ENCODE measurements at regions of chr7 and their contacts with region 1.

Region 1: GRCh38 chr7:105776058-105776751 is 100.2 kb downstream of the ATXN7L1 start:
- DNase-seq: peak; percentile 94
- ATAC-seq: peak; percentile 94
- H3K4me3 ChIP-seq: peak overlapping the region in 1 of 2 experiments; percentile 38; a peak in 2 of 4 replicates
- H3K27ac ChIP-seq: peak overlapping the region; percentile 51; the same call in 1 of the 2 replicates
- H3K4me1 ChIP-seq: peaks cover 29 to 71% of the 10 kb centered on the region in 2 experiments
- H3K27me3 ChIP-seq: no peaks in the 10 kb centered on the region
- CTCF ChIP-seq: no peak
- POLR2A ChIP-seq: no peak
- RAD21 ChIP-seq: peak; percentile 41; the same call in 1 of the 2 replicates

Region 2: GRCh38 chr7:105830391-105831301 is 54.4 kb after region 1 on chr7:
- CTCF ChIA-PET with region 1: no interaction called
- POLR2A ChIA-PET with region 1: no interaction called
- RAD21 ChIA-PET with region 1: no interaction called
- intact Hi-C with region 1: loop called (anchors 1 kb)
- DNase-seq: peak; percentile 95
- ATAC-seq: peak; percentile 91
- H3K4me3 ChIP-seq: peak overlapping the region in 1 of 2 experiments; percentile 31; a peak in 2 of 4 replicates
- H3K27ac ChIP-seq: peak overlapping the region; percentile 57
- H3K4me1 ChIP-seq: peaks cover 49 to 63% of the 10 kb centered on the region in 2 experiments
- H3K27me3 ChIP-seq: no peaks in the 10 kb centered on the region
- CTCF ChIP-seq: no peak
- POLR2A ChIP-seq: no peak
- RAD21 ChIP-seq: peak; percentile 41; the same call in 1 of the 2 replicates

Region 3: GRCh38 chr7:105876091-105876963 is 100.1 kb after region 1 on chr7 and contains the start of gene ATXN7L1:
- CTCF ChIA-PET with region 1: no interaction called
- POLR2A ChIA-PET with region 1: no interaction called
- RAD21 ChIA-PET with region 1: no interaction called
- intact Hi-C with region 1: loop called (anchors 2 kb)
- DNase-seq: peak; percentile 95
- ATAC-seq: peak; percentile 89
- H3K4me3 ChIP-seq: peak within 1 kb of the TSS; percentile 87 to 92
- H3K27ac ChIP-seq: peak within 1 kb of the TSS; percentile 76
- H3K4me1 ChIP-seq: peaks cover 11 to 36% of the 10 kb centered on the region in 2 experiments
- H3K27me3 ChIP-seq: no peaks in the 10 kb centered on the region
- CTCF ChIP-seq: peak in 1 of 3 experiments; percentile 33; a peak in 1 of 6 replicates
- POLR2A ChIP-seq: peak; percentile 86
- RAD21 ChIP-seq: no peak
- total RNA-seq, gene ATXN7L1: 11.5 TPM